ENCODE measurements at regions of chr19 and their contacts with region 1.

Region 1: GRCh38 chr19:56155124-56155687 is 14.1 kb downstream of the ZNF444 start:
- DNase-seq: peak in 1 of 2 experiments; percentile 87
- H3K4me3 ChIP-seq: no peak overlapping the region
- H3K27ac ChIP-seq: 0 out of 2 replicates have a peak overlapping the region, but pooled peaks have one; percentile 11
- H3K4me1 ChIP-seq: peaks cover 5 to 10% (median 8%) of the 10 kb centered on the region in 4 experiments
- H3K27me3 ChIP-seq: no peaks in the 10 kb centered on the region
- CTCF ChIP-seq: peak; percentile 87 to 97 (median 96)
- EP300 ChIP-seq: no peak
- POLR2A ChIP-seq: no peak
- RAD21 ChIP-seq: peak; percentile 85 to 88

Region 2: DNA sequence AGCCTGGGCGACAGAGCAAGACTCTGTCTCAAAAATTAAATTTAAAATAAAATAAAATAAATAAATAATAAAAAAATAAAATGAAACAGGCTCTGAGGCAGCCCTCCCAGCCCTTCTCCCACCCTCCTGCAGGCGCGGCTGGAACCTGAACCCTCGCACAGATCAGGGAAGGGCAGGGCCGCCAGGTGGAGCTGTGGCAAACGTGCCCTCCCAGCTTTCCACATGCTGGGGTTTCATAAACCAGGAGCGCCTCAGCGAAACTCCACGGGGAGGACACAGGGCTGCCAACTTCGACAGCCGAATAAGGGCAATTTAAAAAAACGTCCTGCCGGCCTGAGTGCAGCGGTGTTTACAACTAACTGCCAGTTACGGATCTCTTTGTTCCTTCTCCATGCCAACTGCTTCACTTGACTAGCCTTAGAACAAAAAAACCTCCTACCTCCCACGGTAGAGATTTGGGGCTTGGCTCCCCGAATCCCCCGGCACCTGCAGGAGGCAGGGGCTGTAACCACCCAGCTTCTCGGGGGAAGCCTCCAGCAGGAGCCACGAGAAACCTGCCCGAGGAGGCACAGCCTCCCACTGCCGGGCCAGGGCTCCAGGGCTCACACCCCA is 50.0 kb before region 1 on chr19:
- CTCF ChIA-PET with region 1: interaction called, 14 read pairs
- POLR2A ChIA-PET with region 1: interaction called, 4 read pairs
- DNase-seq: peak; percentile 61 to 89
- H3K4me3 ChIP-seq: no peak overlapping the region
- H3K27ac ChIP-seq: no peak overlapping the region
- H3K4me1 ChIP-seq: peaks cover 0 to 23% (median 14%) of the 10 kb centered on the region in 4 experiments; a peak in 6 of 7 replicates
- H3K27me3 ChIP-seq: no peaks in the 10 kb centered on the region; a peak in 1 of 7 replicates
- CTCF ChIP-seq: peak; percentile 81 to 91 (median 91)
- EP300 ChIP-seq: no peak
- POLR2A ChIP-seq: no peak
- RAD21 ChIP-seq: peak; percentile 69 to 73

Region 3: GRCh38 chr19:56140583-56141416 is 14.4 kb before region 1 on chr19 and contains the start of gene ZNF444:
- CTCF ChIA-PET with region 1: interaction called, 47 read pairs
- POLR2A ChIA-PET with region 1: interaction called, 21 read pairs
- DNase-seq: peak; percentile 98 to 99
- H3K4me3 ChIP-seq: peak within 1 kb of the TSS; percentile 70 to 78 (median 70)
- H3K27ac ChIP-seq: peak within 1 kb of the TSS; percentile 79
- H3K4me1 ChIP-seq: peaks cover 7 to 12% (median 9%) of the 10 kb centered on the region in 4 experiments; a peak in 6 of 7 replicates
- H3K27me3 ChIP-seq: no peaks in the 10 kb centered on the region
- CTCF ChIP-seq: no peak
- EP300 ChIP-seq: no peak
- POLR2A ChIP-seq: no peak
- RAD21 ChIP-seq: no peak
- total RNA-seq, gene ZNF444: 46.9 and 49.5 TPM in 2 replicates

Region 4: GRCh38 chr19:56211718-56212117 is 56.5 kb after region 1 on chr19:
- CTCF ChIA-PET with region 1: interaction called, 13 read pairs
- POLR2A ChIA-PET with region 1: no interaction called
- DNase-seq: no peak
- H3K4me3 ChIP-seq: no peak overlapping the region
- H3K27ac ChIP-seq: no peak overlapping the region
- H3K4me1 ChIP-seq: peaks cover 0 to 2% (median under 1%) of the 10 kb centered on the region in 4 experiments; a peak in 2 of 7 replicates
- H3K27me3 ChIP-seq: no peaks in the 10 kb centered on the region
- CTCF ChIP-seq: peak in 2 of 3 experiments; percentile 10 to 12; a peak in 1 of 4 replicates
- EP300 ChIP-seq: no peak
- POLR2A ChIP-seq: no peak
- RAD21 ChIP-seq: no peak

Region 5: GRCh38 chr19:56245067-56245740 is 90.0 kb after region 1 on chr19:
- CTCF ChIA-PET with region 1: interaction called, 76 read pairs
- POLR2A ChIA-PET with region 1: no interaction called
- DNase-seq: no peak
- H3K4me3 ChIP-seq: no peak overlapping the region
- H3K27ac ChIP-seq: no peak overlapping the region
- H3K4me1 ChIP-seq: no peaks in the 10 kb centered on the region
- H3K27me3 ChIP-seq: no peaks in the 10 kb centered on the region
- CTCF ChIP-seq: no peak
- EP300 ChIP-seq: no peak
- POLR2A ChIP-seq: no peak
- RAD21 ChIP-seq: no peak